Natural killer cell (primary cell): ENCODE measurements at regions of chr19 and their contacts with region 1.

Region 1: DNA sequence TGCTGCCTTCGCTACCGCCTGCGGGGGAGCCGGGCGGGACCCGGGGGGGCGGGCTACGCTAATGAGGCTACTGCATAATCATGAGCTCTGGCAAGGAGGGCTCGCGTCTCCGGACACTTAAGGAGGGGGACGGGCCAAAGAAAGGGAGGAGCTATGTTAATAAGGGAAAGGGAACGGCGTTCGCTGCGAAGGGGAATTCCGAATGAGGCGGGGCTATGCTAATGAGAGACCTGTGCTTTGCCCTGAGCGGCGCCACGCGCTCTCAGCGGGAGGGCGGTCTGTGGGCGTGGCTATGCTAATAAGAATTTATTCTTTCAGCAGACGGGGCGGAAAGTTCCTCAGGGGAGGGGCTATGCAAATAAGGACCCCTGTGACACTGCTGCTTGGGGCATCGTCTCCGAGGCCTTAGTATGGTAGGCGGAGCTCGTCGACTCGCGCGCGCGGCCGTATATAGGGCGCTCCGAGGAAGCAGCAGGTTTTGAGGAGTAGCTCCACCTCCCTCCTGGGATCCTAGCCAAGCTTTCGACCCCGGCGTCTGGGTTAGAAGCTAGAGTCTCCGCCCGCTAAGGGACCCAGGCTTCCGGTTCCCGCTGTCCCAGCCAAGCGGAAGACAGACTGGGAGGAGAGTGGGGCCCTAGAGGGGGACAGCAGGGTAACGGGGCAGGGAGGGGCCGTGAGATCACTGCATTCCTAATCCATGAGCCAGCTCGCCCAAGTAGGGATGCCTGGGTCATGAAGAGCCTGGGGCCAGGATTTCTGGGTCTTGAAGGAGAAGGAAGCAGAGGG is at the start of gene RRAS:
- DNase-seq: peak; percentile 99 to 100
- ATAC-seq: peak; percentile 71 to 87 (median 73)
- H3K4me3 ChIP-seq: peak within 1 kb of the TSS; percentile 58
- H3K4me3 Mint-ChIP-seq: peak within 1 kb of the TSS; percentile 93
- H3K27ac ChIP-seq: peak within 1 kb of the TSS; percentile 86
- H3K27ac Mint-ChIP-seq: peak within 1 kb of the TSS; percentile 96 to 100
- H3K4me1 ChIP-seq: peaks cover 44% of the 10 kb centered on the region
- H3K4me1 Mint-ChIP-seq: peaks cover 45 to 63% of the 10 kb centered on the region in 2 donors
- H3K27me3 ChIP-seq: no peaks in the 10 kb centered on the region
- H3K27me3 Mint-ChIP-seq: no peaks in the 10 kb centered on the region
- CTCF ChIP-seq: no peak
- total RNA-seq, gene RRAS: 2.0 to 7.7 (median 5.9) TPM

Region 2: DNA sequence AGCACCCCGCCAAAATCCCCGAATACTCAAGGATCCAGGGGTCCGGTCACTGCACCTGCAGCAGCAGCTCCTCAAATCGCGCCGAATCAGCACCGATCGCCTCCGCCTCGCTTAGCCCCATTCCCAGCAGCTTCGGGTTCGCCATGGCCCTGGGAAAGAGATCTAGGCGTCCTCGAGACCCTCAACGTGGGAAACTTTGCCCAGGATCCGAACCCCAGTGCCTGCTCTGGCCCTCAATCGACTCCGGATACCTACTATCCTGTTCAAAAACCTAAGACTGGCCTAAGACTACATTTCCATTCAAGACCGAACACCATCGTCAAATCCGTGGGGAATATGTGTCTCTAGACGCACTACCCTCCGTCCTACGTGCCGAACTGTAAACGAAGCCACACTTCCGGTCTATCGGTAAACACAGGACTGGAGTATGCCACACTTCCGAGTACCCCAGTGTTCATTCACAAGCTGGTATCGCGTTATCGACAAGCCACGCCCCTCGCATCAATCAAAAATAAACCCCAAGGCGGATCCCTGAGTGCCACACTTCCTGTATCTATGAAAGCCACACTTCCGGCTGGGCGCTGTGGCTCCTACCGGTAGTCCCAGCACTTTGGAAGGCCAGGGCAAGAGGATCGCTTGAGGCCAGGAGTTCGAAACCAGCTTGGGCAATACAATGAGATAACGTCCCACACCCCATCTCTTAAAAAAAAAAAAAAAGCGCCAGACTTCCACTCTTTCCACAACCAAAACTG is 188.7 kb before region 1 on chr19 and contains the start of gene PIH1D1:
- intact Hi-C with region 1: loop called (anchors 1 kb)
- DNase-seq: peak; percentile 89 to 99
- ATAC-seq: peak; percentile 66 to 77 (median 70)
- H3K4me3 ChIP-seq: peak within 1 kb of the TSS; percentile 95
- H3K4me3 Mint-ChIP-seq: peak within 1 kb of the TSS; percentile 99
- H3K27ac ChIP-seq: peak within 1 kb of the TSS; percentile 99
- H3K27ac Mint-ChIP-seq: peak within 1 kb of the TSS; percentile 98 to 100
- H3K4me1 ChIP-seq: peaks cover 40% of the 10 kb centered on the region
- H3K4me1 Mint-ChIP-seq: peaks cover 44 to 47% of the 10 kb centered on the region in 2 donors
- H3K27me3 ChIP-seq: no peaks in the 10 kb centered on the region
- H3K27me3 Mint-ChIP-seq: no peaks in the 10 kb centered on the region
- CTCF ChIP-seq: no peak
- total RNA-seq, gene PIH1D1: 112 to 149 (median 138) TPM

Region 3: DNA sequence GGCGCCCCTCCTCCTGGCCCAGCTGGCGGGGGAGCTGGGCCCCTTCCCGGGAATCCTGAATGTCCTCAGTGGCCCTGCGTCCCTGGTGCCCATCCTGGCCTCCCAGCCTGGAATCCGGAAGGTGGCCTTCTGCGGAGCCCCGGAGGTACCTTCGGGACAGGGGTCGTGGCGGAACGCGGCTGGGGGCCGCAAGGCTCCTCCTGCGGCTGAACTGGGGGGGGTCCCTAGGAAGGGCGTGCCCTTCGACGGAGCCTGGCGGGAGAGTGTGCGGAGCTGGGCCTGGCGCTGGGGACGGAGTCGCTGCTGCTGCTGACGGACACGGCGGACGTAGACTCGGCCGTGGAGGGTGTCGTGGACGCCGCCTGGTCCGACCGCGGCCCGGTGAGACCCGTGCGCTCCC is 178.7 kb before region 1 on chr19:
- intact Hi-C with region 1: no loop called
- DNase-seq: no peak
- ATAC-seq: no peak
- H3K4me3 ChIP-seq: no peak overlapping the region
- H3K4me3 Mint-ChIP-seq: no peak overlapping the region
- H3K27ac ChIP-seq: no peak overlapping the region
- H3K27ac Mint-ChIP-seq: no peak overlapping the region
- H3K4me1 ChIP-seq: peaks cover 15% of the 10 kb centered on the region
- H3K4me1 Mint-ChIP-seq: peaks cover 0 to 6% of the 10 kb centered on the region in 2 donors
- H3K27me3 ChIP-seq: no peaks in the 10 kb centered on the region
- H3K27me3 Mint-ChIP-seq: no peaks in the 10 kb centered on the region
- CTCF ChIP-seq: no peak

Region 4: GRCh38 chr19:49497047-49497788 is 143.1 kb before region 1 on chr19:
- intact Hi-C with region 1: loop called (anchors 1 kb)
- DNase-seq: peak; percentile 43 to 91
- ATAC-seq: no peak
- H3K4me3 ChIP-seq: peak overlapping the region; percentile 62
- H3K4me3 Mint-ChIP-seq: peak overlapping the region; percentile 99
- H3K27ac ChIP-seq: peak overlapping the region; percentile 83
- H3K27ac Mint-ChIP-seq: peak overlapping the region; percentile 97 to 98
- H3K4me1 ChIP-seq: peaks cover 83% of the 10 kb centered on the region
- H3K4me1 Mint-ChIP-seq: peaks cover 55 to 69% of the 10 kb centered on the region in 2 donors
- H3K27me3 ChIP-seq: no peaks in the 10 kb centered on the region
- H3K27me3 Mint-ChIP-seq: no peaks in the 10 kb centered on the region
- CTCF ChIP-seq: no peak

Region 5: GRCh38 chr19:49580264-49581006 is 59.9 kb before region 1 on chr19 and contains the start of gene NOSIP:
- intact Hi-C with region 1: loop called (anchors 2 kb)
- DNase-seq: peak; percentile 92 to 99
- ATAC-seq: peak; percentile 99 to 100 (median 99)
- H3K4me3 ChIP-seq: peak within 1 kb of the TSS; percentile 61
- H3K4me3 Mint-ChIP-seq: peak within 1 kb of the TSS; percentile 96
- H3K27ac ChIP-seq: peak within 1 kb of the TSS; percentile 47
- H3K27ac Mint-ChIP-seq: peak within 1 kb of the TSS; percentile 89 to 92
- H3K4me1 ChIP-seq: peaks cover 14% of the 10 kb centered on the region
- H3K4me1 Mint-ChIP-seq: peaks cover 21 to 32% of the 10 kb centered on the region in 2 donors
- H3K27me3 ChIP-seq: no peaks in the 10 kb centered on the region
- H3K27me3 Mint-ChIP-seq: no peaks in the 10 kb centered on the region
- CTCF ChIP-seq: no peak
- total RNA-seq, gene NOSIP: 46.7 to 63.6 (median 59.8) TPM

Region 6: DNA sequence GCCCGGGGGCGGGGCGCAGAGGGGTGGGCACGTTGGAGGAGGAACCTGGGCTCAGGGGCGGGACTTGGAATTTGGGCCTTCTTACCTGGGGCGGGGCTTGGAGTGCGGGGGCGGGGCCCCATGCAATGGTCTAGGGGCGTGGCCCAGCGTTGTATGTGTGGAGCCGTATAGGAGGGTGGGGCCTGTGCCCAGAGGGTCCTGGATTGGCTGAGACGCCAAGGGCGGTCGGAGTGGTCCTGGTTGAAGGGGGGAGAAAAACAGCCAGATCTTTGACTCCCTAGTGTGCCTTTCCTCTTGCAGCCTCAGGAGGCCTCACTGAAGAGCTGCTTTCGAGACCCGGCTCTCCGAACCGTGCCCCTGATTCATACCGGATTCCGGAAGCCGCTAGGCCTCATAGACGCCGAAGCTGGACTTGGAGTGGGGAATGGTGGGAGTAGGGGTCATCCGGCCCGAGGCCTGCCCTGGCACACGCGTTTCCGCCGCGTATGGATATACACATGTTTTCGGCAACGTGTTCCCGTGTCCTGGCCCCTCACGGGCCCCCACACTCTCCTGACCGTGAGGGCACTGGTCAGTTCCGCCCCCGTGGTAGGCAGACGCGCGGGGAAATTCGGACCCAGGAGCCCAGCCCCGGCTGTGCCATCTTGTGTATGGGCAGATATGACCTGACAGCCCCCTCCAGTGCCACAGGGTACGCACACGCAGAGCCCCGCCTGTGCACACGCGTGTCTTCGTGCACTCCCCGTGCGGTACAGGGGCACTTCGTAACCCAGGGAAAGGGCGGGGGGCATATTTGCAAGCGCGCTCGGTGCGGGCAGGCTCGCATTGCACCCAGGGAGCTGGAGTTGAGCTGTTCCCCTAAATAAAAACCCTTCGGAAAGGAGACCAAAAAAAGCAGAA is 50.0 kb before region 1 on chr19:
- intact Hi-C with region 1: loop called (anchors 1 kb)
- DNase-seq: peak; percentile 88 to 97
- ATAC-seq: peak; percentile 74 to 91 (median 80)
- H3K4me3 ChIP-seq: peak overlapping the region; percentile 88
- H3K4me3 Mint-ChIP-seq: peak overlapping the region; percentile 90
- H3K27ac ChIP-seq: peak overlapping the region; percentile 52
- H3K27ac Mint-ChIP-seq: peak overlapping the region; percentile 89 to 90
- H3K4me1 ChIP-seq: peaks cover 29% of the 10 kb centered on the region
- H3K4me1 Mint-ChIP-seq: peaks cover 32 to 41% of the 10 kb centered on the region in 2 donors
- H3K27me3 ChIP-seq: no peaks in the 10 kb centered on the region
- H3K27me3 Mint-ChIP-seq: no peaks in the 10 kb centered on the region
- CTCF ChIP-seq: no peak

Region 7: GRCh38 chr19:49665351-49666119 is 25.2 kb after region 1 on chr19 and contains the starts of genes BCL2L12 and IRF3:
- intact Hi-C with region 1: loop called (anchors 1 kb)
- DNase-seq: peak; percentile 98 to 100
- ATAC-seq: peak; percentile 83 to 93 (median 86)
- H3K4me3 ChIP-seq: peak within 1 kb of the TSS; percentile 91
- H3K4me3 Mint-ChIP-seq: peak within 1 kb of the TSS; percentile 99
- H3K27ac ChIP-seq: peak within 1 kb of the TSS; percentile 73
- H3K27ac Mint-ChIP-seq: peak within 1 kb of the TSS; percentile 96 to 99
- H3K4me1 ChIP-seq: peaks cover 34% of the 10 kb centered on the region
- H3K4me1 Mint-ChIP-seq: peaks cover 33 to 50% of the 10 kb centered on the region in 2 donors
- H3K27me3 ChIP-seq: no peaks in the 10 kb centered on the region
- H3K27me3 Mint-ChIP-seq: no peaks in the 10 kb centered on the region
- CTCF ChIP-seq: no peak
- total RNA-seq, gene BCL2L12: 15.6 to 34.6 (median 22.3) TPM
- total RNA-seq, gene IRF3: 176 to 184 (median 179) TPM